ENCODE measurements at regions of chr1 and their contacts with region 1.

Region 1: GRCh38 chr1:212070720-212071302 is 35.3 kb downstream of the DTL start:
- DNase-seq: peak; percentile 72
- H3K4me3 ChIP-seq: no peak overlapping the region
- H3K27ac ChIP-seq: no peak overlapping the region
- H3K4me1 ChIP-seq: peaks cover 23% of the 10 kb centered on the region
- H3K27me3 ChIP-seq: no peaks in the 10 kb centered on the region
- CTCF ChIP-seq: peak; percentile 48 to 49
- POLR2A ChIP-seq: no peak

Region 2: DNA sequence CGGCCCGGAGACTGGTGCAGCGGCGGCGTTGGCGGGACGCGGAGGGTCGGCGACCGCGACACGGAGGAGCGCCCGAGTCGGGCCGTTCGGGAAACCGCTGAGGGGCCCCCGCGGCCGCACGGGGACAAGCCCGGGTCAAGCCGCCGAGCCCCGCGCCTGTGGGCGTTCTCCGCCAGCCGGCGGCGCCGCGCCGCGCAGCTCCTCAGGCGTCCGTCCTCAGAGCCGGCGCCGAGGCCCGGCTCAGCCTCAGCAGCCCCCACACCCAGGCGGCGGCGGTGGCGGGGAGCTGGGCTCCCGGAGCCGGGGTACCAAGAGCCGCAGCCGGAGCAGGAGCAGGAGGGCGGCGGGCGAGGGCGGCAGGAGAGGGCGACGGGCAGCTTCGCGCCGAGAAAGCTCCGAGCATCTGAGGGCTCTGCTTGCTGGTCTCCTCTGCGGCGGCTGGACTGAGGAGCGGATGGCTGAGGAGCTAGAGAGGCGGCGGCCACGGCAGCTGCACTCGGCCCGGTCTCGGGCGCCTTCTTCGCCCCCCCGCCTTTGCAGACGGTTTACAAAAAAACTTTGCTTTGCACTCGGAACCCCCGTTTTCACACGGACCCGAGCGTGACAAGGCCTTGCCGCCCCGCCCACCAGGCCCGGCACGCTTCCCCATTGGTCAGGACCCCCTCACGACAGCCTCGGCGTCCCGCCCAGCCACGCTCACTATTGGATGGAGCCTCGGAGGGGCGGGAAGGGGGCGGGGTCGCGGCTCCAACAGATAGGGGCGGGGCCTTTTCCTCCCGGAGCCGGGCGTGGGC is 492.0 kb before region 1 on chr1 and contains the start of gene SLC30A1:
- CTCF ChIA-PET with region 1: no interaction called
- POLR2A ChIA-PET with region 1: no interaction called
- dilution Hi-C with region 1: no loop called
- intact Hi-C with region 1: no loop called
- DNase-seq: peak; percentile 98
- H3K4me3 ChIP-seq: peak within 1 kb of the TSS; percentile 74 to 99 (median 98)
- H3K27ac ChIP-seq: peak within 1 kb of the TSS; percentile 64
- H3K4me1 ChIP-seq: peaks cover 33% of the 10 kb centered on the region
- H3K27me3 ChIP-seq: no peaks in the 10 kb centered on the region
- CTCF ChIP-seq: no peak
- POLR2A ChIP-seq: peak; percentile 94
- total RNA-seq, gene SLC30A1: 21.5 and 22.1 TPM in 2 replicates

Region 3: GRCh38 chr1:211680752-211681327 is 390.0 kb before region 1 on chr1:
- CTCF ChIA-PET with region 1: interaction called, 35 read pairs
- POLR2A ChIA-PET with region 1: no interaction called
- dilution Hi-C with region 1: no loop called
- intact Hi-C with region 1: loop called (anchors 2 kb)
- DNase-seq: peak; percentile 86
- H3K4me3 ChIP-seq: no peak overlapping the region
- H3K27ac ChIP-seq: no peak overlapping the region
- H3K4me1 ChIP-seq: peaks cover 3% of the 10 kb centered on the region
- H3K27me3 ChIP-seq: peaks cover 0 to 2% of the 10 kb centered on the region in 2 experiments
- CTCF ChIP-seq: peak; percentile 59 to 66
- POLR2A ChIP-seq: no peak

Region 4: DNA sequence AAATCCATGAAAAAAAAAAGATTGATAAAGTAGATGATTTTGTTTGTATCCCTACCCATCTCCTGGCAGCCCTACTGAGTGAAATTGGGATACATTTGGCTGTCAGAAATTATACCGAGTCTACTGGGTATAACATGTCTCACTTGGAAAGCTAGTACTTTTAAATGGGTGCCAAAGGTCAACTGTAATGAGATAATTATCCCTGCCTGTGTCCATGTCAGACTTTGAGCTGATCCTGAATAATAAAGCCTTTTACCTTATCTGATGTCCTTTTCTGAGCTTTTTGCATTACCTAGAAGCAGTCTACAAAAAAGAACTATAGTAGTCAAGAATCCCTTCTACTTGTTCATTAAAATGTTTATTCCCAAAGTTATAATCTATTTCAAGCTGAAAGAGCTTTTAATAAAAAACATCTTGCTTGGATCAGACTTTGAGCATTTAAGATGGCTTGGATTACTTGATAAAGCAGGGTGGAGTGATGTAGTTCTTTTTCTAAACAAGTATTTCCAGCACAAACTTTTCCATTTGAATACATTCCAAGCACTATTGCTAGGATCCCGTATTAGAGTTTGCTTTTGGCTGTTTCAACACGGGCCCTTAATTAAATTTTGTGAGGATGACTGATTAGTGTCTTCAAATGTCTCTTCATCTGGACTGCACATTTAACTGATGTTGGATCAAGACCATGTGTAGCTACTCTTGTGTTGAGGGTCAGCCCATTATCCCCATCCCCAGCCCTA is 33.9 kb after region 1 on chr1:
- CTCF ChIA-PET with region 1: interaction called, 24 read pairs
- POLR2A ChIA-PET with region 1: no interaction called
- dilution Hi-C with region 1: no loop called
- intact Hi-C with region 1: no loop called
- DNase-seq: no peak
- H3K4me3 ChIP-seq: no peak overlapping the region
- H3K27ac ChIP-seq: no peak overlapping the region
- H3K4me1 ChIP-seq: peaks cover 3% of the 10 kb centered on the region
- H3K27me3 ChIP-seq: no peaks in the 10 kb centered on the region
- CTCF ChIP-seq: no peak
- POLR2A ChIP-seq: no peak

Region 5: DNA sequence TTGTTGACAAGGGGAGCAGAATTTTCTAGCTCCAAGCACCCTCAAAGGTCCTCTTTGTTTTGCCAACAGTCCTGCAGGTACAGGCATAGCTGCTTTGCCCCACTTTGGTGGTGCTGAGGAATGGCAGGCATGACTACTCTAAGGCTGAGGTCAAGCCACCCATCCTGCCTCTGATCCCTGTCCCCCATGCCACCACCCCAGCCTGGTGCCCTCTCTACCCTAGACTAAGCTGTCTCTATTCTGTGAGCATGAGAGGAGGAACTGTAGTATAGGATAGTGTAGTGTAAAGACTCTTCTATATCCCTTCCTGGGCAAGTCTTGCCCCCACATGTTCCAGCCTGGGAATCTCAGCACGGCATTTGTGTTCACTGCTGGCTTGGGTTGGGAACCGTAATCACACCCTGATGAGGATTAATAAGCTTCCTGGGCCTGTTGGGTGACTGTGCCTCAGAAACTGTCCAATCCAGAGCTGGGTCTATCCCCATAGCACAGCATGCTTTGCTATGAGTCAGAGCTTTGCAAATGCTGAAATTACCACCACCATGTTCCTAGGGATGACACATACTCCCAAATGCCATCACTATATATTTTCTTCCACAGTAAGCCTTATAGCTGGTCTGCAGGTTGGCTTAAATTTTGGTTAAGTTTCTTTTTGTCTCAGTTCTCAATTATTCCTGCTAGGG is 108.7 kb after region 1 on chr1:
- CTCF ChIA-PET with region 1: interaction called, 11 read pairs
- POLR2A ChIA-PET with region 1: no interaction called
- dilution Hi-C with region 1: no loop called
- intact Hi-C with region 1: no loop called
- DNase-seq: no peak
- H3K4me3 ChIP-seq: no peak overlapping the region
- H3K27ac ChIP-seq: no peak overlapping the region
- H3K4me1 ChIP-seq: no peaks in the 10 kb centered on the region
- H3K27me3 ChIP-seq: peaks cover 0 to 1% of the 10 kb centered on the region in 2 experiments
- CTCF ChIP-seq: no peak
- POLR2A ChIP-seq: no peak

Region 6: DNA sequence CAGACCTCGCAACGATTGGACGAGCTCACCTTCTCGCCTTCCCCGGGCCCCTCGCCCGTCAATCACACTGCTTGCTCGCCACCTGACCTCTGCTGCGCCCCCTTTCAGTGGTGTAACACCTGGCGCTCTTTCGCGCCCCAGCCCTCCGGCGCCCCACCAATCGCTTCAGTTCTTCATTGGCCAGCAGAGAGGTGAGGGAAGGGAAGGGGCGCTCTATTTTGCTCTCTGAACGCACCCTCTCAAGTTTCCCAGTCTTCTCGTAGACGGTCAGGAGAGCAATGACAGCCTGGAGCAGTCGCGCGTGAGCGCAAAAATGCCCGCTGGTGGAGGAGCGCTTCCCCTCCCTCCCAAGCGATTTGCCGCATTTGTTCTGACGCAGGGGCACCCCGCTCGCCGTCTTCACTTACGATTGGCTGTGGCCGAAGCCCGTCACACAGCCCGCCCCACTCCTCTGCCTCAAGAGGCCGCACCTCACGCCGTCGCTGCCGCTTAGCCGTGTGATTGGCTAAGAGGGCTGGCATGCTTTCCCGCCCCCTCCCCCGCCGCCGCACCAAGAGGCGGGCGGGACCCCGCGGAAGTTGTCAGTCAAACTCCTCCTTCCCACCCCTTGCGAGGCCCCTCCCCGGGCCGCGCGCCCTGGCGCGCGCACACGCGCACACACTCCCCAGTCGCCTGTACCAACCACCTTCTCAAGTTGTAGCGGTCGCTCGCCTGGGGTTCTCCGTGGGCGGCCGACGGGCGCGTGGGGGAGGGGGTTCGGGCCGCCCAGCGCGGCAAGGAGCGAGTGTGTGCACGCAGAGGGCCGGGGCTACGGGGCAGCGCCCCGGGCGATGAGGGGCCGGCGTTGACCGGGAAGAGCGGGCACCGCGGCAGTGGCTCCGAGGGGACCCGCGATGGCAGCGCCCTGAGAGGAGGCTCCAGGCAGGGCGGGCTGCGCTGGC is 214.2 kb after region 1 on chr1 and contains the start of gene PPP2R5A:
- CTCF ChIA-PET with region 1: interaction called, 113 read pairs
- POLR2A ChIA-PET with region 1: interaction called, 3 read pairs
- dilution Hi-C with region 1: no loop called
- intact Hi-C with region 1: loop called (anchors 1 kb)
- DNase-seq: peak; percentile 100
- H3K4me3 ChIP-seq: peak within 1 kb of the TSS; percentile 63 to 86 (median 85)
- H3K27ac ChIP-seq: peak within 1 kb of the TSS; percentile 44
- H3K4me1 ChIP-seq: peaks cover 19% of the 10 kb centered on the region
- H3K27me3 ChIP-seq: no peaks in the 10 kb centered on the region
- CTCF ChIP-seq: peak in 1 of 2 donors; percentile 15
- POLR2A ChIP-seq: peak; percentile 53
- total RNA-seq, gene PPP2R5A: 27.7 and 34.5 TPM in 2 replicates

Region 7: GRCh38 chr1:212341090-212341489 is 270.3 kb after region 1 on chr1:
- CTCF ChIA-PET with region 1: interaction called, 18 read pairs
- POLR2A ChIA-PET with region 1: no interaction called
- dilution Hi-C with region 1: no loop called
- intact Hi-C with region 1: no loop called
- DNase-seq: no peak
- H3K4me3 ChIP-seq: no peak overlapping the region
- H3K27ac ChIP-seq: no peak overlapping the region
- H3K4me1 ChIP-seq: no peaks in the 10 kb centered on the region
- H3K27me3 ChIP-seq: no peaks in the 10 kb centered on the region
- CTCF ChIP-seq: no peak
- POLR2A ChIP-seq: no peak

Region 8: GRCh38 chr1:212359794-212360479 is 289.1 kb after region 1 on chr1:
- CTCF ChIA-PET with region 1: interaction called, 148 read pairs
- POLR2A ChIA-PET with region 1: no interaction called
- dilution Hi-C with region 1: no loop called
- intact Hi-C with region 1: no loop called
- DNase-seq: no peak
- H3K4me3 ChIP-seq: no peak overlapping the region
- H3K27ac ChIP-seq: no peak overlapping the region
- H3K4me1 ChIP-seq: no peaks in the 10 kb centered on the region
- H3K27me3 ChIP-seq: no peaks in the 10 kb centered on the region
- CTCF ChIP-seq: no peak
- POLR2A ChIP-seq: no peak

Measured in endothelial cell of umbilical vein (primary cell).